Caco-2 (cell line): ENCODE measurements at regions of chrX and their contacts with region 1.

Region 1: DNA sequence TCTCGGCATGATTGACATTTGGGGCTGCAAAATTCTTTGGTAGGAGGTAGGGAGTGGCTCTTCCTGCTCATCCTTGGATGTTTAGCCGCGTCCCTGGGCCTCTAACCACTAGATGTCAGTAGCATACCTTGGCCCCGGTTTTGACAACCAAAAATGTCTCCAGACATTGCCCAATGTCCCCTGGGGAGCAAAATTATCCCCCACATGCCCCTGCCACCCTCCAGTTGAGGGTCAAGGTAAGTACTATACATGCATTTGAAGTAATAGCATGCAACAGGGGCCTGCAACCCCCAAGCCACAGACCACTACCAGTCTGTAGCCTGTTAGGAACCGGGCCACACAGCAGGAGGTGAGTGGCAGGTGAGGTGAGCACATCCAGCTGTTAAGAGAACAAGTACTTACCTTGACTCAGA is 17.6 kb upstream of the KIAA1210 start:
- DNase-seq: peak; percentile 32 to 36
- H3K4me3 ChIP-seq: no peak overlapping the region
- H3K4me3 Mint-ChIP-seq: no peak overlapping the region
- H3K27ac Mint-ChIP-seq: no peak overlapping the region
- H3K4me1 ChIP-seq: no peaks in the 10 kb centered on the region
- H3K4me1 Mint-ChIP-seq: no peaks in the 10 kb centered on the region
- H3K27me3 ChIP-seq: no peaks in the 10 kb centered on the region
- H3K27me3 Mint-ChIP-seq: no peaks in the 10 kb centered on the region
- CTCF ChIP-seq: peak; percentile 23 to 61

Region 2: DNA sequence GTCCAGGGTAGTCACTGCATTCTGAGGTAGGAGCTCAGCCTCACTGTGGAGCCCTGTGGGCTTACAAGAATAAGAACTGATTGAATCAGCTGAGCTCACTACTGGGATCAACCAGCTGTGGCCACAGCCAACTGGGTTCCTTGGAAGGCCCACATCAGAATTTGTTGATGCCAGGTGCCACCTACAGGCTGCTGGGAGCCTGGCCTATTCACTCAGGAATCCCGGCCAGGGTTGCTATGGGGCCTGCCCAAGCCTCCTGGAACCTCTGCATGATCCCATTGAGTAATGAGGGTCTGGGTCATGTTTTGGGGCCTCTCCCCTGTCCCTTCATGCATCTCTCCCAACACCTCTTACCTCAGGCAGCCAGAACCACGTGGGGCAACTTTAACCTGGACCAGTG is 36.2 kb after region 1 on chrX:
- CTCF ChIA-PET with region 1: interaction called, 4 read pairs
- POLR2A ChIA-PET with region 1: no interaction called
- intact Hi-C with region 1: loop called (anchors 1 kb)
- DNase-seq: peak; percentile 34 to 36
- H3K4me3 ChIP-seq: no peak overlapping the region
- H3K4me3 Mint-ChIP-seq: no peak overlapping the region
- H3K27ac Mint-ChIP-seq: no peak overlapping the region
- H3K4me1 ChIP-seq: no peaks in the 10 kb centered on the region
- H3K4me1 Mint-ChIP-seq: no peaks in the 10 kb centered on the region
- H3K27me3 ChIP-seq: no peaks in the 10 kb centered on the region
- H3K27me3 Mint-ChIP-seq: peaks cover 8% of the 10 kb centered on the region
- CTCF ChIP-seq: peak; percentile 23 to 52

Region 3: GRCh38 chrX:119194621-119195020 is 49.4 kb after region 1 on chrX:
- CTCF ChIA-PET with region 1: interaction called, 3 read pairs
- POLR2A ChIA-PET with region 1: no interaction called
- intact Hi-C with region 1: loop called (anchors 1 kb)
- DNase-seq: no peak
- H3K4me3 ChIP-seq: no peak overlapping the region
- H3K4me3 Mint-ChIP-seq: no peak overlapping the region
- H3K27ac Mint-ChIP-seq: no peak overlapping the region
- H3K4me1 ChIP-seq: no peaks in the 10 kb centered on the region
- H3K4me1 Mint-ChIP-seq: no peaks in the 10 kb centered on the region
- H3K27me3 ChIP-seq: no peaks in the 10 kb centered on the region
- H3K27me3 Mint-ChIP-seq: peaks cover 9% of the 10 kb centered on the region
- CTCF ChIP-seq: peak; percentile 21 to 26

Region 4: GRCh38 chrX:119222932-119223331 is 77.7 kb after region 1 on chrX:
- CTCF ChIA-PET with region 1: no interaction called
- POLR2A ChIA-PET with region 1: no interaction called
- intact Hi-C with region 1: loop called (anchors 1 kb)
- DNase-seq: no peak
- H3K4me3 ChIP-seq: no peak overlapping the region
- H3K4me3 Mint-ChIP-seq: no peak overlapping the region
- H3K27ac Mint-ChIP-seq: no peak overlapping the region
- H3K4me1 ChIP-seq: no peaks in the 10 kb centered on the region
- H3K4me1 Mint-ChIP-seq: peaks cover 7% of the 10 kb centered on the region
- H3K27me3 ChIP-seq: no peaks in the 10 kb centered on the region
- H3K27me3 Mint-ChIP-seq: peaks cover 15% of the 10 kb centered on the region
- CTCF ChIP-seq: no peak

Region 5: DNA sequence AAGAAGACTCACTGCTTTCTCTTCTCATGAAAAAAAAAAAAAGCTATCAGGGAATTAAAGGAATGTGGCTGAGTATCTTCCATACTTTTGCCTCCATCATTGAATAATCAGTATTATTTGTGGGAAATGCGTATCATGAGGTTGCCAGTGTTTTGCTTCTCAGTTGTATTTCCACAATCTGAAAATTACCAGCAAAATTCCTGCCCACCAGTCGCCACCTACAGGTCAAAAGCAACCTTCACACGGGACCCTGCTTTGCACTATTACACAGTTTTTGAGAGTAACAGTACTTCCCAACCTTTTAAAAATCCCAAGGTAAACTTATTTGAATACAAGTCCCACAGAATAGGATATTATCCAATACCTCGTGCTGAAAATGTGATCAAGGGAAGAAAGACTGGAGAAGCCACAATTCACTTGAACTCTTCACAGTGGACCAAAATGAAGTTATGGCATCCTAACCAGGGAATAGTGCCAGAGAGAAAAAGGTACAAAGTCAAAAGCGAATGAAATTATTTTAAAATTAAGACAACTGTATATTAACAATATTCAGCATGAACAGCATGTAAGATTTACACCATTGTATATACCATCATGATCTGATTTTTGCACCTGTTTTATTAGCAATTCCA is 121.2 kb after region 1 on chrX:
- CTCF ChIA-PET with region 1: no interaction called
- POLR2A ChIA-PET with region 1: no interaction called
- intact Hi-C with region 1: loop called (anchors 1 kb)
- DNase-seq: peak in 1 of 2 experiments; percentile 4
- H3K4me3 ChIP-seq: no peak overlapping the region
- H3K4me3 Mint-ChIP-seq: no peak overlapping the region
- H3K27ac Mint-ChIP-seq: no peak overlapping the region
- H3K4me1 ChIP-seq: no peaks in the 10 kb centered on the region
- H3K4me1 Mint-ChIP-seq: no peaks in the 10 kb centered on the region
- H3K27me3 ChIP-seq: no peaks in the 10 kb centered on the region
- H3K27me3 Mint-ChIP-seq: peaks cover 2% of the 10 kb centered on the region
- CTCF ChIP-seq: peak; percentile 46 to 75

Region 6: DNA sequence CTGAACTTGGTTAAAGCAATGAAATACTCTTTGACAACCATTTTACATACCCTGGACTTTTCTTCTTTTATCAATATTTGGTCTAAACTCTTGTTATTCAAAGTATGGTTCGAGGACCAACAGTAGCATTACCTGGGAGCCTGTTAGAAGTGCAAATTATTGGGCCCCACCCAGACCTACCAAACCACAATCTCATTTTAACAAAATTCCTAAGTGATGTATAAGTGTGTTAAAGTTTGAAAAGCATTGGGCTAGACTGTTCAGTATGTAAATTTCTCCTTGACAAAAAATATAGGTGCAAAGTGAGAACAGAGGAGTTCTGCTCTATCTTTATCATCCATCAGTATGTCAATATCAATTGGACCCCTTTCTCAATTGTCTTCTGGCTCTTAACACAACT is 157.9 kb after region 1 on chrX:
- CTCF ChIA-PET with region 1: no interaction called
- POLR2A ChIA-PET with region 1: no interaction called
- intact Hi-C with region 1: no loop called
- DNase-seq: no peak
- H3K4me3 ChIP-seq: no peak overlapping the region
- H3K4me3 Mint-ChIP-seq: no peak overlapping the region
- H3K27ac Mint-ChIP-seq: no peak overlapping the region
- H3K4me1 ChIP-seq: no peaks in the 10 kb centered on the region
- H3K4me1 Mint-ChIP-seq: no peaks in the 10 kb centered on the region
- H3K27me3 ChIP-seq: no peaks in the 10 kb centered on the region
- H3K27me3 Mint-ChIP-seq: no peaks in the 10 kb centered on the region
- CTCF ChIP-seq: no peak